ENCODE measurements at regions of chr2 and their contacts with region 1.

Region 1: DNA sequence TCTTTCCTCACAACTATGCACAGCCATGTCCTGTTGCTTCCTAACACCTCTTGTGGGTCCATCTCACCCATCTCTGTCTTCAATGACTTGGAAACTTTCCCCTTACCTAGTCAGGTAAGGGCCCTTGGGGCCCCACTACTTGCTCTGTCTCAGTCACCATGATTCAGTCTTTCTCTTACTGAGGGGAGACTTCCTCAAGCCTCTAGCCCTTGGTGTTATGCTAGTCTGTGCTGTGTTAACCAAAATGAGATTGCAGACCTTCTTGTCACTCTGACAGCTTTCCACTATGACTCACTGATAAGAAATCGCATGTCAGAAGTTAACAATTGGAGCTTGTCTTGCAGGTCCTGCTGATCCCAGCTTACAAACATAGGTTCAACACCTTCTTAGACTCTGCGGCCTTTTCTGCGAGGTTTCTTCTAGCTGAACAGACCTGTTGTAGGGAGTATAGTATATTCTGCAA is 65.3 kb downstream of the WDR75 start:
- DNase-seq: peak; percentile 47
- ATAC-seq: peak; percentile 37; the same call in 1 of the 2 replicates
- H3K4me3 ChIP-seq: no peak overlapping the region
- H3K27ac ChIP-seq: no peak overlapping the region
- H3K4me1 ChIP-seq: no peaks in the 10 kb centered on the region
- H3K27me3 ChIP-seq: no peaks in the 10 kb centered on the region
- CTCF ChIP-seq: no peak
- POLR2A ChIP-seq: no peak
- RAD21 ChIP-seq: no peak

Region 2: DNA sequence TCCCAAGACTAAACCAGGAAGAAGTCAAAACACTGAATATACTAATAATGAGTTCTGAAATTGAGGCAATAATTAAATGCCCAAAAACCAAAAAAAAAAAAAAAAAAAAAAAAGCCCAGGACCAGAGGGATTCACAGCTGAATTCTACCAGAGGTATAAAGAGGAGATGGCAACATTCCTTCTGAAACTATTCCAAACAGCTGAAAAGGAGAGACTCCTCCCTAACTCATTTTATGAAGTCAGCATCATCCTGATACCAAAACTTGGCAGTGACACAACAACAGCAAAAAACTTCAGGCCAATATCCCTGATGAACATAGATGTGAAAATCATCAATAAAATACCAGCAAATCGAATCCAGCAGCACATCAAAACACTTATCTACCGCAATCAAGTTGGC is 640.9 kb before region 1 on chr2:
- CTCF ChIA-PET with region 1: no interaction called
- POLR2A ChIA-PET with region 1: no interaction called
- dilution Hi-C with region 1: no loop called
- in situ Hi-C with region 1: no loop called
- intact Hi-C with region 1: no loop called
- DNase-seq: no peak
- ATAC-seq: no peak
- H3K4me3 ChIP-seq: no peak overlapping the region
- H3K27ac ChIP-seq: no peak overlapping the region
- H3K4me1 ChIP-seq: peaks cover 5% of the 10 kb centered on the region
- H3K27me3 ChIP-seq: no peaks in the 10 kb centered on the region
- CTCF ChIP-seq: no peak
- POLR2A ChIP-seq: no peak
- RAD21 ChIP-seq: no peak

Region 3: DNA sequence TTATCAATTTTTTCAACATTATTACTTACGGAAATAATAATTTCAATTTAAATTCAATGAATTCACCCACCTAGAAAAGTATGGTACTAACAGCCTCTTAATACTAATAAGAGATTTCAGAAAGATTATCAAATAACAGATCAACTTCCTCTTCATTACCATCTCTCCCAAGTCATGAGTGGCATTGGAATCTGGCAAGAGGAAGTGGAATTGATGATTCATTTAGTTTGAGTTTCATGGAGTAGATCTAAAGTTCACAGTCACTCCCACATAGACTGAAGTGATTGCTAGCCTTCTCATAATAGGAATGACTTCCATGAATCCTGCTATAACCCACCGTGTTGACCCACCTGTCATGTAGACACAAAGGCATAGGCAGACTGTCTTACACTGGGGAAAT is 143.0 kb before region 1 on chr2:
- CTCF ChIA-PET with region 1: no interaction called
- POLR2A ChIA-PET with region 1: no interaction called
- dilution Hi-C with region 1: no loop called
- in situ Hi-C with region 1: no loop called
- intact Hi-C with region 1: no loop called
- DNase-seq: peak; percentile 65
- ATAC-seq: peak; percentile 27; the same call in 1 of the 2 replicates
- H3K4me3 ChIP-seq: no peak overlapping the region
- H3K27ac ChIP-seq: no peak overlapping the region
- H3K4me1 ChIP-seq: no peaks in the 10 kb centered on the region
- H3K27me3 ChIP-seq: no peaks in the 10 kb centered on the region
- CTCF ChIP-seq: no peak
- POLR2A ChIP-seq: no peak
- RAD21 ChIP-seq: no peak

Region 4: GRCh38 chr2:189552334-189552990 is 45.9 kb after region 1 on chr2:
- CTCF ChIA-PET with region 1: no interaction called
- POLR2A ChIA-PET with region 1: no interaction called
- dilution Hi-C with region 1: no loop called
- in situ Hi-C with region 1: no loop called
- intact Hi-C with region 1: loop called (anchors 5 kb)
- DNase-seq: no peak
- ATAC-seq: no peak
- H3K4me3 ChIP-seq: no peak overlapping the region
- H3K27ac ChIP-seq: no peak overlapping the region
- H3K4me1 ChIP-seq: peaks cover 6% of the 10 kb centered on the region
- H3K27me3 ChIP-seq: no peaks in the 10 kb centered on the region
- CTCF ChIP-seq: no peak
- POLR2A ChIP-seq: no peak
- RAD21 ChIP-seq: no peak